ENCODE measurements at regions of chr9 and their contacts with region 1.

Region 1: GRCh38 chr9:130701056-130702022 is 7.8 kb downstream of the EXOSC2 start:
- DNase-seq: peak in 3 of 4 donors; percentile 61 to 88 (median 81)
- ATAC-seq: peak; percentile 96
- H3K4me3 ChIP-seq: no peak overlapping the region
- H3K27ac ChIP-seq: no peak overlapping the region
- H3K4me1 ChIP-seq: no peaks in the 10 kb centered on the region
- H3K27me3 ChIP-seq: no peaks in the 10 kb centered on the region
- CTCF ChIP-seq: peak; percentile 88 to 91

Region 2: DNA sequence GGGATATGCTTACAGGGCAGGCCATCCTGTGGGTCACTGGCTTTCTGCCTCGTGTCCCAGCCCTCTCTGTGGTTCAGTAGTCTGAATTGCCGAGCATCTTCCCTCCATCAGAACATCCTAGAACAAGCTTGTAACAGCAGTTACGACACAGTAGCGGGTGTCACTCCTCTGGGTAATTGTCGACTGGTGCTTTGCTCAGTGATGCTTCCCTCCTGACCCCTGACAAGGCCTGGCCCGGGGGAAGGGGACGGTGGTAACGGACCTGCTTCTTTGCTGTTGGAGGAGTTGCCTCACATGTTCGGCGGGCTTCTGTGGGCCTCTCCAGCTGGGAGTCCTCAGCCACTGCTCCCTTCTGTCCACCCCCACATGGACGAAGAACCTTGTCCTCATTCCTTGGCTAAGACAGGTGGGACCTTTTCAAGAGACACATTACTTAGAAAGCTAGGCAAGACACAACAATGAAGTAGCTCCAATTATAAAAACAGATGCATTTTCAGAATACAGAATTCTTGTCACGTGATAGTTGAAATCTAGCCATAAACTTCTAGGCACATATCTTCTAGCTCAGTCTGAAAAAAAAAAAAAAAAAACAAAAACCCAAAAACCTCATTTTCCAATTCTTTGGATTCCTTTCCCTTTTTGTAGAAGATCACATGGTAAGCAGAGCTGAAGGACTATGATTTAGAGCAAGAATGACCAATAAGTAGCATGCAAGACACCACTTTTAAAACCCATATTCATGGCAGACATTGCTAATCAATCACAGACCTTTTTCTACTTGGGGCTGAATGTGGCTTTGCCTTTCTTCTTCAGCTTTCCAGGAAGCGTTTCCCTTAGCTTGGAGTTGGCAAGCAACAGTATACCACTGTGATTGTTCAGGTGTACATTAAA is 410.8 kb before region 1 on chr9:
- intact Hi-C with region 1: no loop called
- DNase-seq: peak in 2 of 4 donors; percentile 59 to 72
- ATAC-seq: peak; percentile 49
- H3K4me3 ChIP-seq: no peak overlapping the region
- H3K27ac ChIP-seq: peak overlapping the region in 1 of 2 donors; percentile 7
- H3K4me1 ChIP-seq: peaks cover 8 to 9% of the 10 kb centered on the region in 2 donors
- H3K27me3 ChIP-seq: peaks cover 0 to 26% of the 10 kb centered on the region in 2 donors
- CTCF ChIP-seq: no peak

Region 3: GRCh38 chr9:130651752-130652151 is 49.6 kb before region 1 on chr9:
- intact Hi-C with region 1: no loop called
- DNase-seq: peak in 1 of 4 donors; percentile 44
- ATAC-seq: no peak
- H3K4me3 ChIP-seq: no peak overlapping the region
- H3K27ac ChIP-seq: no peak overlapping the region
- H3K4me1 ChIP-seq: no peaks in the 10 kb centered on the region
- H3K27me3 ChIP-seq: peaks cover 8 to 92% of the 10 kb centered on the region in 2 donors
- CTCF ChIP-seq: no peak

Region 4: GRCh38 chr9:130940693-130941576 is 239.6 kb after region 1 on chr9:
- intact Hi-C with region 1: loop called in 1 of 2 experiments (anchors 10 kb)
- DNase-seq: peak in 3 of 4 donors; percentile 62 to 93 (median 78)
- ATAC-seq: peak; percentile 95
- H3K4me3 ChIP-seq: no peak overlapping the region
- H3K27ac ChIP-seq: no peak overlapping the region
- H3K4me1 ChIP-seq: peaks cover 0 to 37% of the 10 kb centered on the region in 2 donors
- H3K27me3 ChIP-seq: peaks cover 37 to 81% of the 10 kb centered on the region in 2 donors
- CTCF ChIP-seq: peak; percentile 71 to 84

Region 5: DNA sequence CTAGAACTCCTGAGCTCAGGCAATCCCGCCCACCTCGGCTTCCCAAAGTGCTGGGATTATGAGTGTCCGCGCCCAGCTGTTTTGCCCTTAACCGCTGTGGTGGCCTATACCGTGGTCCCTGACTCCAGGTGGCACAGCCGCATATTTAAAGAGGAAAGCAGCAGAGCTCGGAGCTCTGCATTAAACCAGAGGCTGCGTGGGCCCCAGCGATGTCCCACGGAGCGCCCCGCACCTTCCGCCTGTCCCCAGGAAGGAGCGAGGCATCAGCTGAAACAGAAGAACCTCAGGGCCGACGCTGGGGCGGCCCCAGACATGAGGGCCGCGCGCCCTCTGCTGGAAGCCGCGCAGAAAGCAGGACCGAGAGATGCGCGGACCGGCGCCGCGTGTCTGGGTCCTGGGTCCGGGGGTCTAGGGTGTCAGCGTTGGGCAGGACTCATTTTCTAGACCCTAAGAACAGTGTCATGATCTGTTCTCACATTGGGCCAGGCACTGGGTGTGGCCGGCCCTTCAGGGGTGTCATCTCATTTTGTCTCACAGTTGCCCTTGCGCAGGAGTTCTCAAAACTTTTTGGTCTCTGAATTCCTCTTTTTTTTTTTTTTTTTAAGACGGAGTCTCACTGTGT is 345.4 kb after region 1 on chr9:
- intact Hi-C with region 1: loop called in 1 of 2 experiments (anchors 10 kb)
- DNase-seq: peak; percentile 51 to 93 (median 64)
- ATAC-seq: peak; percentile 97
- H3K4me3 ChIP-seq: no peak overlapping the region
- H3K27ac ChIP-seq: no peak overlapping the region
- H3K4me1 ChIP-seq: peaks cover 3 to 7% of the 10 kb centered on the region in 2 donors
- H3K27me3 ChIP-seq: peaks cover 0 to 31% of the 10 kb centered on the region in 2 donors
- CTCF ChIP-seq: peak; percentile 76 to 94